ENCODE measurements at regions of chr19 and their contacts with region 1.

Region 1: GRCh38 chr19:8252922-8253589 is 43.9 kb downstream of the CERS4 start:
- DNase-seq: peak; percentile 82
- H3K4me3 Mint-ChIP-seq: no peak overlapping the region
- H3K27ac Mint-ChIP-seq: no peak overlapping the region
- H3K4me1 Mint-ChIP-seq: no peaks in the 10 kb centered on the region
- H3K27me3 Mint-ChIP-seq: peaks cover 13% of the 10 kb centered on the region
- CTCF ChIP-seq: peak; percentile 83

Region 2: DNA sequence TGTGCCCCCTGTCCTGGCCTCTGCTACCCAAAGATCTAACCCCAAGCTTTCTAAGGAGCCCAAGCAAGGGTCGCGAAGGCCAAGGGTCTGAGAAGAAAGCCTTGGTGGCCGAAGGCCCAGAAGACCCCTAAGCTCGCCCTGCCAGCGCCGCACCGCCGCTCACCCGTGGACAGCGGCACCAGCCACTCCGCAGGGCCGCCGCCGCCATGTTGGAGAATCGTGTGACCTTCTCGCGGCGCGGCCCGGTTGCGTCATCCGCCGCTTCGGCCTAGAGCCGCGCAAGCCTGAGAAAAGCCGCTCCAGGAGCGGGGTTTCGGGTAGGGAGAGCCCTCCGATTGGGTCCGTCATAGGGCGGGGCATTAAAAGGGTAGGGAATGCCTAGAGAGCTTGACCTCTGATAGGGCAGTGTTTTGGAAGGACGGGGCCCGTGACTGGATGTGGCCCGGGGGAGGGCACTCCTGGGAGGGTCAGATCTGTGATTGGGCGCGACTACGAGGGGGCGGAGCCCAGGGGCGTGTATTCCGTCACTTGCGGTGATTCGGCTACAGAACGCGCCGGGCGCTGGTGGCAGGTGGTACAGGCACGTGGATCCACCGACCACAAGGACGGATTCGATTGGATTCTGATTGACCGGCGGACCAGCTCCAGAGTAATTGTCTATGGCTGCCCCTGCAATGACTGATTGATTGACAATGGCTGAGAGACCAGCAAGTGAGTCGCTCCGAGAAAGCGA is 309.4 kb before region 1 on chr19 and contains the start of gene TIMM44:
- CTCF ChIA-PET with region 1: interaction called, 4 read pairs
- intact Hi-C with region 1: loop called (anchors 2 kb)
- DNase-seq: peak; percentile 97
- H3K4me3 Mint-ChIP-seq: peak within 1 kb of the TSS; percentile 91
- H3K27ac Mint-ChIP-seq: peak within 1 kb of the TSS; percentile 93
- H3K4me1 Mint-ChIP-seq: peaks cover 20% of the 10 kb centered on the region
- H3K27me3 Mint-ChIP-seq: no peaks in the 10 kb centered on the region
- CTCF ChIP-seq: no peak
- total RNA-seq, gene TIMM44: 55.0 and 57.8 TPM in 2 replicates

Region 3: GRCh38 chr19:8158411-8159074 is 94.5 kb before region 1 on chr19:
- CTCF ChIA-PET with region 1: interaction called, 11 read pairs
- intact Hi-C with region 1: loop called (anchors 1 kb)
- DNase-seq: peak; percentile 55
- H3K4me3 Mint-ChIP-seq: no peak overlapping the region
- H3K27ac Mint-ChIP-seq: no peak overlapping the region
- H3K4me1 Mint-ChIP-seq: peaks cover 18% of the 10 kb centered on the region
- H3K27me3 Mint-ChIP-seq: no peaks in the 10 kb centered on the region
- CTCF ChIP-seq: peak; percentile 17

Region 4: DNA sequence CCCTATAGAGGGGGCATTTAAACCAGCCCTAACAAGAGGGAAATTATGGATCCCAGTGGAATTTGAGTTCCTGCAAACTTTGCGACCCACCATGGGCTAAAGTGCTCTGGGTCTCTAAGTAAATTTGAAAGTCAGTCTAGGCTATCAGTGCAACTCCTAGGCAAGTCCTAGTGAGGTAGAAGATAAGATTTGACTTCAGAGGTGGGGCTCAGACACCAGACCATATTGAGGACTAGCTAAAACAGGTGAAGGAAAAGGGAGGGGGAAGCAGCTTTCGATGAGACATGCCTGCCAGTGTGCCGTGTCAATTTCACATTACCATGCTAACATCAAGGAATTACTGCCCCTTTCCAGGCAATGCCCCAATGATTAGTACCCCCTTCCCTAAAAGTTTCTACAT is 16.7 kb after region 1 on chr19:
- CTCF ChIA-PET with region 1: no interaction called
- intact Hi-C with region 1: no loop called
- DNase-seq: no peak
- H3K4me3 Mint-ChIP-seq: peak overlapping the region; percentile 65
- H3K27ac Mint-ChIP-seq: no peak overlapping the region
- H3K4me1 Mint-ChIP-seq: peaks cover 8% of the 10 kb centered on the region
- H3K27me3 Mint-ChIP-seq: no peaks in the 10 kb centered on the region
- CTCF ChIP-seq: no peak

Region 5: DNA sequence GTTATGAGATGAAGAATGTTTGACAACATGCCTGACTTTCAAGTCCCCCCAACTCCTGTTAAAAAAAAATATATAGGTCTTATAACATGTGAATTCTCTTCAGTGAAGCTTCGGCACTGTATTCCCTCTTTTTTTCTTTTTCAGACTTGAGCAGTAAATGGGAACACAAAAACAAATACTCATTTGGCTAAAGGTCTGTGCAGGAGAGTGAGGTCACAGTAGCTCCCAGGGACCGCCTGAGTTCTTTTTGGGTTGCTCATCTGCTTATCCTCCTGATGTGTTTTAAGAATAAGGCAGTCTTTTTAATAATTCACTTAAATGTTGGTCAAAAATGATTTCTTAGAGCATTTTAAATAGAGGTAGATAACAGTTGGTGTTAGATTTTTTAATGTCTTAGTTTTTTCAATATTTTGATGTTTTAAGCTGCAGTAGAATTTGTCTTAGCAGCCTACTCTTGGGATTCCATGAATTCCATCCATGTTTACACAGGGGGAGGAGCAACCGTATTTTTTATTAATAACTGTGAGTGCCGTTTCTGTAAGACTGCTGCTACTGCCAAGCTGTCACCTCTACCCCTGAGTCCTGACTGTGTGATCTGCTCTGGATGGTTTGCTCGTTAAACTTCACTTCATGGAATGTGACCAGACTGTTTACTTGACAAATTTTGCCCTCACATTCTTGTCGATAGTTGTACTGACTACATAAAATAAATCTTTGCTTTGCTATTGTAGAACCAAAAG is 206.6 kb after region 1 on chr19:
- CTCF ChIA-PET with region 1: no interaction called
- intact Hi-C with region 1: no loop called
- DNase-seq: no peak
- H3K4me3 Mint-ChIP-seq: peak overlapping the region; percentile 30
- H3K27ac Mint-ChIP-seq: no peak overlapping the region
- H3K4me1 Mint-ChIP-seq: peaks cover 35% of the 10 kb centered on the region
- H3K27me3 Mint-ChIP-seq: no peaks in the 10 kb centered on the region
- CTCF ChIP-seq: no peak

Measured in Calu3 (cell line).